OCI-LY7 (cell line): ENCODE measurements at regions of chr18 and their contacts with region 1.

Region 1: DNA sequence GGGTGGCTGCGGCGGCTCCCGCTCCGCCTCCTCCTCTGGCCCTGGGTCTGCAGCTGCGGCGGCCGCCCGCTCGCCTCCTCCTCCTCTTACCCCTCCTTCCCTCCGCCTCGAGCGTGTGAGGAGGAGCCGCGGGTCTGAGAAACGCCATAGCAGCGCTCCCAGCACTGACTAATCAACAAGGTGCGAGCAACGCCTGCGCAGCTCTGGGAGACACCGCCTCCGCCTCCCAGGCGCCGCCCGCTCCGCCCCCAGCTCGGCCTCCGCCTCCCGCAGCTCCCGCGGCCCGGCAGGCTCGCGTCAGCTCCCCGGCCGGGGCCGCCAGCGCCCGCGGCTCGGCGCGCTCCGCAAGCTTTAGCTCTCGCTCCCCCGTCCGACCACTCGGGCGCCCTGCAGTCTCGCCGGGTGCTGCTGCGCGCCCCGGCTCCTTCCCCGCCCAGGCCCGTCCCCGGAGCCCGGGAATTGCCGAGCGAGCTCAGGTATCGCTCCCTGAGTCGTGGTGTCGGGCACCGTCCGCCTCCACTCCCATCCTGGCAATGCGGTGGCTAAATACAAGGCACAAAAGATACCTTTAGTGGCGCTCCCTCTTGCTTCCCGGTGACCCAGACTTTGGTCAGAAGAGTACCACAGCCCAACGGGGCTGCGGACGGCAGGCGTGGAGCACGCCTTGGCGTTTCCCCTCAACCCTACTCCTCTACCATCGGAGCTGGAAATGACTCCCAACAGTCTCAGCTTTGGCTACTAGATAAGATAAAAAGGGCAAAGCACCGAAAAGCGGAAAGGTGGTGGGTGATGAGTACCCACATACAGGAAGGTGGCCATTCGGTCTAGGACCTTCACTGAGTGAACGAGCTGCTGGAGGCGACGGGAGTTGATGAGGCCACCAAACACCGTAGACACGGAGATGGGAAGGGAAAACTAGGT is at the start of gene GAREM1:
- DNase-seq: peak; percentile 86
- H3K4me3 ChIP-seq: peak within 1 kb of the TSS; percentile 72
- H3K27ac ChIP-seq: no peak within 1 kb of the TSS
- H3K4me1 ChIP-seq: peaks cover 16% of the 10 kb centered on the region
- CTCF ChIP-seq: peak; percentile 51
- total RNA-seq, gene GAREM1: 0.80 and 2.7 TPM in 2 replicates

Region 2: GRCh38 chr18:32271672-32272208 is 199.2 kb before region 1 on chr18:
- CTCF ChIA-PET with region 1: no interaction called
- POLR2A ChIA-PET with region 1: no interaction called
- intact Hi-C with region 1: loop called (anchors 5 kb)
- DNase-seq: peak; percentile 14
- H3K4me3 ChIP-seq: no peak overlapping the region
- H3K27ac ChIP-seq: no peak overlapping the region
- H3K4me1 ChIP-seq: no peaks in the 10 kb centered on the region
- CTCF ChIP-seq: peak; percentile 75

Region 3: DNA sequence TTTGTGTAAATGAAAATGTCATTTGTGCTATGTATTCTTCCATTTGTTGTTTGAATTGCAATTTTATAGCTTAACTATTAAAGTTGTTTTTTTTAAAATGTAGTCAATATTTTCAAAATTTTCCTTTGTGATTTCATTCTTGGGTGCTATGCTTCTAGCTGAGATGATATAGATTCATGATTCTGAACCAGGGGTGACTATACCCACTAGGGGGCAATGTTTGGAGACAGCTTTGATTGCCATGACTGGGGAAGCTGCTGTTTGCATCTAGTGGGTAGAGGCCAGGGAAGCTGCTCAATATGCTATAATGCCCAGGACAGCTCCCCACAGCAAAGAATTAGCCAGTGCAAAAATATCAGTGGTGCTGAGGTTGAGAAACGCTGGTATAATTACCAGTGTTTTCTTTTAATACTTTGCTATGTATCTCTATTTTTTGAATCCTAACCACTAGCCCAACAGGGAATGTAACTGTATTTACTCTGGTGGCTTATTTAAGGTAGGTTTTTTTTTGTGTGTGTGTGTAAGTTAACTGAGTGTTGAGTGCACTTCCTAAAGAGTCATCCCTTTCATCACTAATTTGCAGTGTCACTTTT is 181.4 kb before region 1 on chr18:
- CTCF ChIA-PET with region 1: interaction called, 3 read pairs
- POLR2A ChIA-PET with region 1: no interaction called
- intact Hi-C with region 1: loop called (anchors 2 kb)
- DNase-seq: peak; percentile 36
- H3K4me3 ChIP-seq: no peak overlapping the region
- H3K27ac ChIP-seq: no peak overlapping the region
- H3K4me1 ChIP-seq: no peaks in the 10 kb centered on the region
- CTCF ChIP-seq: peak; percentile 73

Region 4: GRCh38 chr18:32520771-32521170 is 49.8 kb after region 1 on chr18:
- CTCF ChIA-PET with region 1: no interaction called
- POLR2A ChIA-PET with region 1: no interaction called
- intact Hi-C with region 1: no loop called
- DNase-seq: no peak
- H3K4me3 ChIP-seq: no peak overlapping the region
- H3K27ac ChIP-seq: no peak overlapping the region
- H3K4me1 ChIP-seq: no peaks in the 10 kb centered on the region
- CTCF ChIP-seq: no peak